ENCODE measurements at regions of chr11 and their contacts with region 1.

Region 1: GRCh38 chr11:1882519-1883238 is 9.0 kb downstream of the PRR33 start:
- DNase-seq: peak; percentile 73 to 89
- ATAC-seq: peak; percentile 85 to 97
- H3K4me3 ChIP-seq: no peak overlapping the region
- H3K27ac ChIP-seq: no peak overlapping the region; a peak in 1 of 6 replicates
- H3K4me1 ChIP-seq: no peaks in the 10 kb centered on the region
- CTCF ChIP-seq: peak; percentile 81
- EP300 ChIP-seq: no peak
- POLR2A ChIP-seq: no peak
- RAD21 ChIP-seq: peak; percentile 87 to 89

Region 2: DNA sequence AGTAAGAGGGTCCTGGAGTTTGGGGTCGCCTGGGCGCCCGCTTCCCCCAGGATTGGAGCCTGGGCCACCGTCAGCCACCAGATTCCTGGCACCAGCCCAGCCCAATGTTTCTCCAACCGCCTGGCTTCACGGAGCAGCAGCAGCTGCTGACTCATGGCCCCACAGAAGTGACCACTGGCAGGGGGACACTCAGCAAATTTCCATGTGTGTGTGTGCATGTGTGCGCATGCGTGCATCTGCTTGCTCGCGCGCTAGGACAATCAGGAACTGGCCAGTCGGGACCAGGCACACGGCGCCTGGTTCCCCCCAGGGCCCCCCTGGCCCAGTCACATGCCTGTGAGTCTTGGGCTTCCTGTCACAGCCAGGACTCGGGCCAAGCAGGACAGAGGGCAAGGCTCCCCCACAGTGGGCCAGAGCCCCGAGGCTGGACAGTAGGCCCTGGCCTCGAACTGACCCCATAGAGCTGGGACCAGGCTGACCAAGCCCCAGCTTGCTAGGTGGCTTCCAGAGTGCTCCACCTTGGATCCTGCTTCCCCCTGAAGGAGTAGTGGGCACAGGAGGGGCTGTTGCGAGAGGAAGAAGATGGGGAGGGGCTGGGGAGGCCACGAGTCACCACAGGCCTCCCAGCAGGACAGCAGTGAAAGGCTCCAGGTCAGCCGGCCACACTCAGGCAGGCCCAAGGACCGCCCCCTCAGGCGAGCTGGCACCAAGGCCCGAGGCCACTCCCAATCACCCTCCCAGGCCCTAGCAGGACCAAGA is 122.1 kb before region 1 on chr11:
- CTCF ChIA-PET with region 1: no interaction called
- POLR2A ChIA-PET with region 1: no interaction called
- DNase-seq: no peak
- ATAC-seq: no peak
- H3K4me3 ChIP-seq: no peak overlapping the region
- H3K27ac ChIP-seq: peak overlapping the region; percentile 63 to 97
- H3K4me1 ChIP-seq: peaks cover 45% of the 10 kb centered on the region
- CTCF ChIP-seq: no peak
- EP300 ChIP-seq: no peak
- POLR2A ChIP-seq: no peak
- RAD21 ChIP-seq: no peak

Region 3: GRCh38 chr11:1845561-1846452 is 36.9 kb before region 1 on chr11:
- CTCF ChIA-PET with region 1: interaction called, 30 read pairs
- POLR2A ChIA-PET with region 1: no interaction called
- DNase-seq: no peak
- ATAC-seq: no peak
- H3K4me3 ChIP-seq: no peak overlapping the region
- H3K27ac ChIP-seq: no peak overlapping the region
- H3K4me1 ChIP-seq: peaks cover 7% of the 10 kb centered on the region
- CTCF ChIP-seq: no peak
- EP300 ChIP-seq: no peak
- POLR2A ChIP-seq: no peak
- RAD21 ChIP-seq: no peak

Region 4: GRCh38 chr11:1870721-1871466 is 11.8 kb before region 1 on chr11:
- CTCF ChIA-PET with region 1: interaction called, 35 read pairs
- POLR2A ChIA-PET with region 1: no interaction called
- DNase-seq: no peak
- ATAC-seq: peak in 1 of 2 experiments; percentile 34; a peak in 3 of 6 replicates
- H3K4me3 ChIP-seq: no peak overlapping the region
- H3K27ac ChIP-seq: peak overlapping the region in 1 of 2 experiments; percentile 56; a peak in 3 of 6 replicates
- H3K4me1 ChIP-seq: peaks cover 25% of the 10 kb centered on the region
- CTCF ChIP-seq: no peak
- EP300 ChIP-seq: no peak
- POLR2A ChIP-seq: no peak
- RAD21 ChIP-seq: no peak

Region 5: DNA sequence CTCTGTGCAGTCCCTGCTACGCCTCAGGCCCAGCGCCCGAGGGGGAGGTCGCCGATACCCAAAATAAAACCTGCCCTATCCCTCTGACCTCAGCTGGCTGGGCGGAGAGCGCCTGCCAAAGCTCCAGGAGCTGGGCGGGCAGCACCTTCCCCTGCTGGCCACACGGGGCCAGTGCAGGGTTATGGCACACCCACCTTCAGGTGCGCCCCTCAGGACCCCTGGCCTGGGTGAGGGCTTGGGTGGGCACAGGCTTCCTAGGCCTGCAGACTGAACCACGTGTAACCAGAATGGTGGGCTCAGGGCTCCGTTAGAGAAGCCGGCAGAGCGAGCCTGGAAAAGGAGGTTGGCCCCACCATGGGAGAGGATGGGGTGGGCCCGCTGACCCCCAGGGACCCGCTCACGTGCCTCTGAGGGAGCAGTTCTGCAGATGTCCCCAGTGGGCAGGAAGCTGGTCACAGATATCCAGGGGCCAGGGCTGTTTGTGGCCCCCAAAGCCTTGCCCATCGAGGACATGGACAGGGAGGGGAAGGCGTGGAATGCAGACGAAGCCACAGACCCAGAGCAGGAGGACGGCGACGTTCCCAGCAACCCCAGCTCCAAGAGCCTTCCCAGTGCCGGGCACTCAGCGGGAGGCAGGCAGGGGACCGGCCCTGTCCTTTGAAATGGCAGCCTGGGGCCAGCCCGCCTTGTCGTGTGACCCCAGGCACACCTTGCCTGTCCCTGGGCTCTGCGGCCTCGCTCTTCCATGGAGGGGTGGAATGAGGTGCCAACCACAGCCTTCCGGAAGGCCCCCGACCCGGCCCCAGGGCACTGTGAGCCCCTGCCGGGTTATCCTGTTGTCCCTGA is 35.2 kb after region 1 on chr11:
- CTCF ChIA-PET with region 1: interaction called, 65 read pairs
- POLR2A ChIA-PET with region 1: no interaction called
- DNase-seq: no peak
- ATAC-seq: peak; percentile 52 to 76; a peak in 5 of 6 replicates
- H3K4me3 ChIP-seq: no peak overlapping the region
- H3K27ac ChIP-seq: no peak overlapping the region
- H3K4me1 ChIP-seq: no peaks in the 10 kb centered on the region
- CTCF ChIP-seq: no peak
- EP300 ChIP-seq: no peak
- POLR2A ChIP-seq: no peak
- RAD21 ChIP-seq: no peak

Region 6: GRCh38 chr11:1943977-1944376 is 61.3 kb after region 1 on chr11:
- CTCF ChIA-PET with region 1: interaction called, 49 read pairs
- POLR2A ChIA-PET with region 1: no interaction called
- DNase-seq: no peak
- ATAC-seq: no peak; a peak in 1 of 6 replicates
- H3K4me3 ChIP-seq: no peak overlapping the region
- H3K27ac ChIP-seq: no peak overlapping the region
- H3K4me1 ChIP-seq: no peaks in the 10 kb centered on the region
- CTCF ChIP-seq: no peak
- EP300 ChIP-seq: no peak
- POLR2A ChIP-seq: no peak
- RAD21 ChIP-seq: no peak

Region 7: DNA sequence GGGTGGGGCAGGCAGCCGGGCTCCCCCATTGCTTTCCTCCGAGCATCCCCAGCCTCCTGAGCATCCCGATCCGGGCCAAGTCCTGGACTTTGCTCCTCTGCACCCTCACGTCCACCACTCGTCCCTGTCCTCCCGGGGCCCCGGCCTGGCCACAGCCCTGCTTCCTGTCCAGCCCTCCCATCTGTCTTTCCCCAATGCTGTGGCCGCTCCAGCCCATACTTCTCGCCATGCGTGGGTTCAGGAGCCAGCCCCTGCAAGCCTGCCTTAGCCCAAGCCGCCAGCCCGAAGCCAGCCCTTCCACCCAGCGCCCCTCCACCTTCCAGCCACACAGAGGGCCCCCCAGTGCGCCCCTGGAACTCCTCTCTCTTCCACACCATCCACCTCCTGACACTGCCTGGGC is 88.3 kb after region 1 on chr11:
- CTCF ChIA-PET with region 1: interaction called, 10 read pairs
- POLR2A ChIA-PET with region 1: no interaction called
- DNase-seq: peak in 1 of 2 experiments; percentile 0
- ATAC-seq: no peak
- H3K4me3 ChIP-seq: no peak overlapping the region
- H3K27ac ChIP-seq: no peak overlapping the region
- H3K4me1 ChIP-seq: no peaks in the 10 kb centered on the region
- CTCF ChIP-seq: no peak
- EP300 ChIP-seq: no peak
- POLR2A ChIP-seq: no peak
- RAD21 ChIP-seq: no peak

Region 8: DNA sequence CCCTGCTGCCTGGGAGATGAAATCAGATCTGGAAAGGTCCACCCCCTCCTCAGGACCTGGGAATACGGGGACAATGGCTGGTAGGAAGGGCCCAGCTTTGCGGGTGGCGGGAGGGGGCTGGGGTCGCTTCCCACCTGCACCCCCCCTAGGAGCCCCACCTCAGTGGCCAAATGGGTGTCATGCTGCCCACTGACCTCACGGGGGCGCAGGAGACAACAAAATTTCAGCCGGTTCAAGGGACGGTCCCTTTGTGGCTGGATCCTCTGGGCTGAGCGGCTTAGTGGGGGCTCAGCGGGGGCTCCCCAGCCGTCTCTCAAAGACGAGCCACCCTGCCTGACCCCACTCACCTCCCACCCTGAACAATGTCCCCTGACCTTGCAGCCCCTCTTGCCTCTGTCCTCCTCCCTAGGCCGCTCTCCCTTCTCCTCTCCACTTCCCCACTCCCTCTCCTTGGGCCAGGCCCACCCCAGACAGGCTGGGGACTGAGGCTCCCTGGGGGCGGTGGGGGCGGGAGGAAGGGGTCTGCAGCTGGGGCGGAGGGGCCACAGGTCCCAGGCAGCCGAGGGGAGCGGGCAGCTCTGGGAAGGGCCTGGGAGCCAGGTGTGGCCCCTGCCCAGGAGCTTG is 154.3 kb after region 1 on chr11:
- CTCF ChIA-PET with region 1: interaction called, 19 read pairs
- POLR2A ChIA-PET with region 1: no interaction called
- DNase-seq: no peak
- ATAC-seq: peak; percentile 44 to 85; a peak in 3 of 6 replicates
- H3K4me3 ChIP-seq: no peak overlapping the region
- H3K27ac ChIP-seq: no peak overlapping the region
- H3K4me1 ChIP-seq: no peaks in the 10 kb centered on the region
- CTCF ChIP-seq: no peak
- EP300 ChIP-seq: no peak
- POLR2A ChIP-seq: no peak
- RAD21 ChIP-seq: no peak